Activated CD8-positive, alpha-beta T cell treated with anti-CD3 and anti-CD28 coated beads for 36 hours (primary cell): ENCODE measurements at regions of chr3 and their contacts with region 1.

Region 1: GRCh38 chr3:42502429-42503250 is at the start of gene VIPR1:
- DNase-seq: peak; percentile 93
- ATAC-seq: peak; percentile 96
- H3K4me3 Mint-ChIP-seq: peak within 1 kb of the TSS; percentile 86
- H3K27ac Mint-ChIP-seq: peak within 1 kb of the TSS; percentile 68
- H3K4me1 Mint-ChIP-seq: peaks cover 35% of the 10 kb centered on the region
- H3K27me3 Mint-ChIP-seq: peaks cover 13% of the 10 kb centered on the region
- CTCF ChIP-seq: no peak
- total RNA-seq, gene VIPR1: 8.5 to 9.0 TPM

Region 2: DNA sequence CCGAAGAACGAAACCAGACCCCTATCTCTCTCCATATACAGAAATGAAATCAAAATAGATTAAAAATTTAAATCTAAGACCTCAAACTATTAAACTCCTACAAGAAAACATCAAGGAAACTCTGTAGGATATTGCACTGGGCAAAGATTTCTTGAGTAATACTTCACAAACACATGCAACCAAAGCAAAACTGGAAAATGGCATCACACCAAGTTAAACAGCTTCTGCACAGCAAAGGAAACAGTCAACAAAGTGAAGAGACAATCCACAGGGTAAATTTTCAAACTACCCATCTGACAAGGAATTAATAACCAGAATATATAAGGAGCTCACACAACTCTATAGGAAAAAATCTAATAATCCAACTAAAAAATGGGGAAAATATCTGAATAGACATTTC is 266.0 kb before region 1 on chr3:
- CTCF ChIA-PET with region 1: no interaction called
- POLR2A ChIA-PET with region 1: no interaction called
- intact Hi-C with region 1: no loop called
- DNase-seq: no peak
- ATAC-seq: no peak
- H3K4me3 Mint-ChIP-seq: no peak overlapping the region
- H3K27ac Mint-ChIP-seq: no peak overlapping the region
- H3K4me1 Mint-ChIP-seq: no peaks in the 10 kb centered on the region
- H3K27me3 Mint-ChIP-seq: peaks cover 17% of the 10 kb centered on the region
- CTCF ChIP-seq: no peak

Region 3: DNA sequence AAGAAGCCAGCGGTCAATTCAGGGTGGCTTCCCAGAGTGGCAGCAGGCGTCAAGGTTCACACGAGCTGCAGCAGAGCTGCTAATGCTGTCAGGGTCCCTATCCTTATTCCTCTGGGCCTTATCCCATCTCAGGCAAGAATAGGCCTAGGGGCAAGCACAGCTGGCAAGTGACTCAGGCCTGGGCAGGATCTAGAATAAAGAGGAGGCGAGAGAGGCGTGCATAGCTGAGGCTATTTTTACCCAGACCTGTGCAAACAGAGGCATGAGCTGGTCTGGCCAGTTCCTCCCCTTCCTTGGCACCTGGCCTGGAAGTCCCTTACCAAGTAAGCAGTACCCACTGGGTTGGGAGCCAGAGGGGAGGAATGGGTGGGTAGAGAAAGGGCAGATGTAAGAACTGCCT is 12.4 kb before region 1 on chr3:
- CTCF ChIA-PET with region 1: interaction called, 14 read pairs
- POLR2A ChIA-PET with region 1: no interaction called
- intact Hi-C with region 1: no loop called
- DNase-seq: no peak
- ATAC-seq: no peak
- H3K4me3 Mint-ChIP-seq: no peak overlapping the region
- H3K27ac Mint-ChIP-seq: no peak overlapping the region
- H3K4me1 Mint-ChIP-seq: no peaks in the 10 kb centered on the region
- H3K27me3 Mint-ChIP-seq: no peaks in the 10 kb centered on the region
- CTCF ChIP-seq: no peak

Region 4: GRCh38 chr3:42518800-42519567 is 16.3 kb after region 1 on chr3:
- CTCF ChIA-PET with region 1: interaction called, 7 read pairs
- POLR2A ChIA-PET with region 1: interaction called, 11 read pairs
- intact Hi-C with region 1: no loop called
- DNase-seq: peak; percentile 74
- ATAC-seq: peak; percentile 19
- H3K4me3 Mint-ChIP-seq: no peak overlapping the region
- H3K27ac Mint-ChIP-seq: peak overlapping the region; percentile 78
- H3K4me1 Mint-ChIP-seq: peaks cover 16% of the 10 kb centered on the region
- H3K27me3 Mint-ChIP-seq: no peaks in the 10 kb centered on the region
- CTCF ChIP-seq: peak; percentile 48

Region 5: DNA sequence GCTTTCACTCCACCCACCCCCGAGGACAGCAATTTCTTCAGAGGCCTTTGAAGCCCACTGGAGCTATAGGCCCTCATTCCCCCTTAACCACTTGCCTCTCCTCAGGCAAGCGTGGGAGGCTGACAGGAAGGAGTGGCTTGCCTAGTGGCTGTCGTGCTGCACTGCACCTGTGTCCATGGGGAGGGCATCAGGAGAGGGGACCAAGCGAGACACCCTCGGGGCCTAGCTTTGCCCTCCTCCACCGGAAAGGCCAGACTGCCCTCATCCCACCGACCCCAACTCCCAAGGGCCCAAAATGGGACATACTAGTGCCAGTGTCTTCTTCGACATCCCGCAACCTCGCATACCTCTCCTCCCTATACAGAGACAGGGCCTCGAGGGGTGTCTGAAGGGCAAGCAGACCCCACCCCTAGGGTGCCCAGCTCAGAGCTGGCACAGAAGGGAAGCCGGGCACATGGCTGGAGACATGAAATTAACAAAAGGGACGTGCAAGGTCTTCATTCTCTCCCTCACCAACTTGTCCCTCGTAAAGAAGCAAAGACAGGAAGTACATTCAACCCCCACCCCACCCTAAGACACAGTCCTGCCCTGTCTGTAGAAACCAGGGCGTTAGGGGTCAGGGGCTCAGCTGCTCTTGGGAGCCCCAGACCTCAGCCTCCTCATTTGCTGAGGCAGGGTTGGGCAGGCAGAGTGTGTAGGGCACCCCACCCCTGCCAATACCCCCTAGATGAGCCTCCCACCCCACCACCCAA is 24.2 kb after region 1 on chr3:
- CTCF ChIA-PET with region 1: interaction called, 22 read pairs
- POLR2A ChIA-PET with region 1: interaction called, 3 read pairs
- intact Hi-C with region 1: no loop called
- DNase-seq: peak; percentile 82
- ATAC-seq: peak; percentile 96
- H3K4me3 Mint-ChIP-seq: peak overlapping the region; percentile 21
- H3K27ac Mint-ChIP-seq: peak overlapping the region; percentile 91
- H3K4me1 Mint-ChIP-seq: peaks cover 57% of the 10 kb centered on the region
- H3K27me3 Mint-ChIP-seq: no peaks in the 10 kb centered on the region
- CTCF ChIP-seq: peak; percentile 17

Region 6: DNA sequence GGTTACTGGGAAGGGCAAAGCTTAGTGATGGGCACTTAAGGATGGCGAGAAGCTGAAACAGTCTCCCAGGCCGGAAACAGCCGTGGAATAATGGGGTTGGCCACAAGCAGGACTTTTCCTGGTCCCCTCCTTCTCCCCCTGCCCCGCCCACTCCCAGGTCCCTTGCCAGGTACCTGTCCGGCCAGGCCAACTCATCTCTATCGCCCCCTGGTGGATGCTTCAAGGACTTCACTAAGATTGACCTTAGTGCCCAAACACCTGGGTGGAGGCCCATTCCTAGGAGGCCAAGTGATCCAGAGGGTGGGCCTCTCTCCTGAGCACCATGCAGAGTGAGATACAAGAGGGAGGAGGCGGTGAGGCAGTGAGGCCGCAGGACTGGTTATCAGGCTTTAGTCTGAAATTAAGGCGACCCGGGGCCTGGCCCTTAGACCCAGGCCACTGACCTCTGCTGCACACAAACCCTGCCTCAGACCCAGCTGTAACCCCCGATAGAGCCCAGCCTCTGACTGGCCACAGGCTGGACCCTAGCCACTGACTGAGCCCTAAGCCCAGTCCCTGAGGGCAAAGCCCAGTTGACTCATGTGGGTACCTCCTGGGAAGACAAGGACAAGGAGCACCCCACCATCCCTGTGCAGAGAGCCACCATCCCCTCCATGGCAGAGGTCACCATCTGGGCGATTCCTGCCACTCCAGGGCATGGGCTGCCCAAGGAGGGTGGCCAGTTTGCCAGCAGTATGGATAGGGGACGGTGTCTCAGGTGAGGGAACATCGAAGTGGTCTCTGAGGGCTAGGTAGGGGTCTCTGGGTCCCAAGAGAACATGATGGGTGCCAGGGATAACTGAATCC is 37.5 kb after region 1 on chr3:
- CTCF ChIA-PET with region 1: interaction called, 111 read pairs
- POLR2A ChIA-PET with region 1: interaction called, 5 read pairs
- intact Hi-C with region 1: loop called (anchors 5 kb)
- DNase-seq: peak; percentile 77
- ATAC-seq: peak; percentile 79
- H3K4me3 Mint-ChIP-seq: no peak overlapping the region
- H3K27ac Mint-ChIP-seq: no peak overlapping the region
- H3K4me1 Mint-ChIP-seq: no peaks in the 10 kb centered on the region
- H3K27me3 Mint-ChIP-seq: no peaks in the 10 kb centered on the region
- CTCF ChIP-seq: peak; percentile 88

Region 7: GRCh38 chr3:42547401-42547945 is 44.8 kb after region 1 on chr3:
- CTCF ChIA-PET with region 1: interaction called, 111 read pairs
- POLR2A ChIA-PET with region 1: interaction called, 3 read pairs
- intact Hi-C with region 1: no loop called
- DNase-seq: peak; percentile 72
- ATAC-seq: peak; percentile 78
- H3K4me3 Mint-ChIP-seq: no peak overlapping the region
- H3K27ac Mint-ChIP-seq: no peak overlapping the region
- H3K4me1 Mint-ChIP-seq: peaks cover 3% of the 10 kb centered on the region
- H3K27me3 Mint-ChIP-seq: no peaks in the 10 kb centered on the region
- CTCF ChIP-seq: peak; percentile 97